HCT116 (cell line): ENCODE measurements at regions of chr7 and their contacts with region 1.

Region 1: DNA sequence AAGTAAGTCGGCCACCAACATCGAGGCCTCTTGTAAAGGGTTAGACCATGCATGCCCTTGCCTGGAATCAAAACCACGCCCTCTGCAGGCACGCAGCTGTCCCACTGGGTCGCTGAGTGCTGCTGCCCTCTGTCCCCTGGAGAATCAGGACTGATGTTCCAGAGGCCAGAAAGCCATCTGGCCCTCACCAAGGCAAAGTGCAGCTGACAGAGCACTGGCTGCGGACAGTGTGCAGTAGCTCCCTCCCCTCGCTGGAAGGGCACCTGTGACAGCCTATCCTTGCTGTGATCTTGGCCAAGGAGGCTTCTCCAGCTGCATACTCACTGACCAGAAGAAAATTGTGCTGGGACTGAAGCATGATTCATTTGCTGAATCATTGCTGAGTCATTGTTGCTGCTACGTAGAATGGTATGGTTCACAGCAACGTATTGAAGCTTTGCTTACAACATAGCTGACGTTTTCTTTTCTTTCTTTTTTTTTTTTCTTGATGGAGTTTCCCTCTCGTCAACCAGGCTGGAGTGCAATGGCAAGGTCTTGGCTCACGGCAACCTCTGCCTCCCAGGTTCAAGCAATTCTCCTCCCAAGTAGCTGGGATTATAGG is 30.4 kb downstream of the DDC start:
- DNase-seq: peak; percentile 95
- ATAC-seq: peak; percentile 83
- H3K4me3 ChIP-seq: peak overlapping the region; percentile 20 to 45
- H3K27ac ChIP-seq: peak overlapping the region; percentile 25
- H3K4me1 ChIP-seq: peaks cover 33 to 50% of the 10 kb centered on the region in 2 experiments
- H3K27me3 ChIP-seq: no peaks in the 10 kb centered on the region
- CTCF ChIP-seq: peak in 2 of 3 experiments; percentile 32 to 41; a peak in 4 of 6 replicates
- POLR2A ChIP-seq: no peak
- RAD21 ChIP-seq: no peak

Region 2: DNA sequence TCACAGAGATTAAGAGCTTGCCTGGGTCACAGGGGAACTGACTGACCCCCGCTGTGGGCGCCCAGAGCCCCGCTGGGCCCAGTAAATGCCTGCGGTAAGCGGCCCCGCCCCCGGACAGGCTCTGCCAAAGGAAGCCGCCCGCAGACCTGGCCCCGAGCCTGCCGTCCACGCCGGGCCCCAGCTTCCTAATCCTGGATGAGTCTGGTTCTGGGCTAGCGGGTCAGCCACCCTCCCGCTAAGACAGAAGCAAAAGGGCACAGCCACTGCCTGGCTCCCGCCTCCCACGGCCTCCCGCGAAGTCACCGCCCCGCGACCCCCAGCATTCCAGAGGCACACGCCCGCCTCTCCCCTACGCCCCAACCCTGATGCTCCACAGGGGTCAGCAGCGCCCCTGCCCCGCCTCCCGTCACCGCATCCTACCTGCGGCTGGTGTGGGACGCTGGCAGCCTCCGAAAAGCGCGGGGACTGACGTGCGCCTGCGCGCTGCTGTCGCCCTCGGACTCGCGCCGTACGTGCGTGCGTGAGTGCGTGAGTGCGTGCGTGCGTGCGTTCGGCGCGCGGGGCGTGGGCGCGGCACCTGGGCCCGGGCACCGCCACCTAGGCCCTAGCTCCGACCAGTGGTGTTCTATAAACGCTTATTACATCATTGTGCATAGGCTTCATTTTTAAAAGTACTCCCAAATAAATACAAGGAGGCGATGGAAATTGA is 84.8 kb before region 1 on chr7 and contains the start of gene FIGNL1:
- CTCF ChIA-PET with region 1: no interaction called
- POLR2A ChIA-PET with region 1: no interaction called
- RAD21 ChIA-PET with region 1: no interaction called
- intact Hi-C with region 1: loop called (anchors 5 kb)
- DNase-seq: peak; percentile 55
- ATAC-seq: peak; percentile 87
- H3K4me3 ChIP-seq: peak within 1 kb of the TSS; percentile 74 to 75
- H3K27ac ChIP-seq: peak within 1 kb of the TSS; percentile 69
- H3K4me1 ChIP-seq: peaks cover 33 to 43% of the 10 kb centered on the region in 2 experiments
- H3K27me3 ChIP-seq: peaks cover 7% of the 10 kb centered on the region; the same call in 1 of the 2 replicates
- CTCF ChIP-seq: no peak
- POLR2A ChIP-seq: no peak
- RAD21 ChIP-seq: no peak
- total RNA-seq, gene FIGNL1: 28.1 TPM